Mammary epithelial cell (primary cell): ENCODE measurements at regions of chr7 and their contacts with region 1.

Region 1: DNA sequence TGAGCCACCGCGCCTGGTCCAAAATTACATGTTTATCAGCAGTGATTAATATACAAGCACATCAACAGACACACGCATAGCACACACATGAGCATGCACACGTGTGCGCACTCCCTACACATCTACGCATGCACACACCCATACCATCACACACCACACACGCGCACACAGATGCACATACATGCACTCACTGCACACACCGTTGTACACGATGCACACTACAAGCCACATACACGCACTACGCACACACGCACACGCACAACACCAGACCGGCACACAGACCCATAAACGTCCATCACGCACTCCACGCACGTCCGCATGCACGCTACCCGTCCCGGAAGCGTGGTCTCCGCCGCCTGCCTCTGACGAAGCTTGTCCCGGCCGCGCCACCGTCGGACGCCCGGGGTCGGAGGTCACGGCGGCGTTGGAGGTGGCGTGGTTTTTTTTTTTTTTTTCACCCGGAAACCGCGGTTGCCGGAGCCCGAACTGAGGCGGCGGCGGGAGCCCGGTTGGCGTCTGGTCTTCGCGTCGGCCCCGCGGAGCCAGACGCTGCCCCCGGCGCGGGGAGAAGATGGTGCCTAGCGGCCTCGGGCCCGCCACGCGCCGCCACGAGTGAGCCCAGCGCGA is at the start of gene TMEM248:
- DNase-seq: peak; percentile 81
- H3K4me3 ChIP-seq: peak within 1 kb of the TSS; percentile 82 to 94 (median 84)
- H3K27ac ChIP-seq: peak within 1 kb of the TSS; percentile 82
- H3K4me1 ChIP-seq: peaks cover 9% of the 10 kb centered on the region
- H3K27me3 ChIP-seq: no peaks in the 10 kb centered on the region
- CTCF ChIP-seq: no peak
- total RNA-seq, gene TMEM248: 76.2 to 113 TPM

Region 2: DNA sequence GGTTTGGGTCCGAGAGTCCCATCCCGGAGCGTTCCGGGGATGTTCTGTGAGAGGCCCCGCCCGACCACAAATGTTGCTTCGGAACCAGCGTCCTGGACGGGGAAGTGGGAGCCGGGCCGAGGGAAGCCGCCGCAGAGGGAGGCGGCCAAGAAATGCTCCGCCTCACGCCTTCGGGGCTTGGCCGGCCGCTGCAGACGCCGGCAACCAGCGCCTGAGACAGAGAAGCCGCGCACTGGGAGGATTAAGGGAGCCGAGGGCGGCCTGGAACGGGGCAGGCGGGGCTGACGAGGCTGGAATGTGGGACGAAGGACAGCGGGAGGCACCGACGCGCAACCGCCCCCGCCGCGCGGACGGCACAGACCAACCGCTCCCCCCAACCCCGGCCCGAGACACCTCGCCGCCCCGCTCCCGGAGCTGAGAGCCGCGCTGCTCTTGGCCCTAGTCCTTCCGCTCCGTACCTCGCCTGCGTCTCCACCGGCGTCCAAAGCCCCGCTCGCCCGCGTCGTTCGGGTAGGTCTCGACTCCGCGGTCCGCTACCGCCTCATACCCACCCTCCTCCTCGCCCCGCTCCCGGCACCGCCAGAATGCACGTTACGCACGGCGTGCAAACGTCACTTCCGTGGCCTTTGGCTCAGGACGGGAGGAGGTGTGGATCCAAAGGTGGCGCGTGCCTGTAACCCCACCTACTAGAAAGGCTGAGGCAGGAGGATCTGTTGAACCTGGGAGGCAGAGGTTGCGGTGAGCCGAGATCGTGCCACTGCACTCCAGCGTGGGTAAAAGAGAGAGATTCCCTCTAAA is 328.9 kb before region 1 on chr7:
- CTCF ChIA-PET with region 1: no interaction called
- dilution Hi-C with region 1: no loop called
- in situ Hi-C with region 1: no loop called
- intact Hi-C with region 1: loop called (anchors 5 kb)
- DNase-seq: peak; percentile 91
- H3K4me3 ChIP-seq: peak overlapping the region; percentile 71 to 96 (median 94)
- H3K27ac ChIP-seq: peak overlapping the region; percentile 92
- H3K4me1 ChIP-seq: peaks cover 16% of the 10 kb centered on the region
- H3K27me3 ChIP-seq: no peaks in the 10 kb centered on the region
- CTCF ChIP-seq: no peak

Region 3: DNA sequence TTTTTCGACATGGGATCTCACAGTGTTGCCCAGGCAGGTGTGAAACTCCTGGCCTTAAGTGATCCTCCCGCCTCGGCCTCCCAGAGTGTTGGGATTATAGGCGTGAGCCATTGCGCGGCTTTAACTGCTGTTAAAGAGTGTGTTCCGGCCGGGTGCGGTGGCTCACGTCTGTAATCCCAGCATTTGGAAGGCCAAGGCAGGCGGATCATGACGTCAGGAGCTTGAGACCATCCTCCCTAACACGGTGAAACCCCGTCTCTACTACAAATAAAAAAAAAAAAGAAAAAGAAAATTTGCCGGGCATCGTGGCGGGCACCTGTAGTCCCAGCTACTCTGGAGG is 179.2 kb before region 1 on chr7:
- CTCF ChIA-PET with region 1: no interaction called
- dilution Hi-C with region 1: no loop called
- in situ Hi-C with region 1: no loop called
- intact Hi-C with region 1: no loop called
- DNase-seq: peak; percentile 34
- H3K4me3 ChIP-seq: peak overlapping the region; percentile 89 to 98 (median 93)
- H3K27ac ChIP-seq: peak overlapping the region; percentile 92
- H3K4me1 ChIP-seq: peaks cover 9% of the 10 kb centered on the region
- H3K27me3 ChIP-seq: no peaks in the 10 kb centered on the region
- CTCF ChIP-seq: no peak

Region 4: GRCh38 chr7:66815951-66816350 is 104.9 kb before region 1 on chr7:
- CTCF ChIA-PET with region 1: no interaction called
- dilution Hi-C with region 1: no loop called
- in situ Hi-C with region 1: no loop called
- intact Hi-C with region 1: no loop called
- DNase-seq: no peak
- H3K4me3 ChIP-seq: no peak overlapping the region
- H3K27ac ChIP-seq: no peak overlapping the region
- H3K4me1 ChIP-seq: no peaks in the 10 kb centered on the region
- H3K27me3 ChIP-seq: no peaks in the 10 kb centered on the region
- CTCF ChIP-seq: no peak

Region 5: GRCh38 chr7:66883716-66884115 is 37.2 kb before region 1 on chr7:
- CTCF ChIA-PET with region 1: no interaction called
- dilution Hi-C with region 1: loop called (anchors 5 kb)
- in situ Hi-C with region 1: no loop called
- intact Hi-C with region 1: no loop called
- DNase-seq: peak; percentile 65
- H3K4me3 ChIP-seq: no peak overlapping the region
- H3K27ac ChIP-seq: no peak overlapping the region
- H3K4me1 ChIP-seq: no peaks in the 10 kb centered on the region
- H3K27me3 ChIP-seq: no peaks in the 10 kb centered on the region
- CTCF ChIP-seq: no peak

Region 6: GRCh38 chr7:66952343-66953043 is 31.6 kb after region 1 on chr7:
- CTCF ChIA-PET with region 1: no interaction called
- dilution Hi-C with region 1: no loop called
- in situ Hi-C with region 1: no loop called
- intact Hi-C with region 1: loop called (anchors 1 kb)
- DNase-seq: peak; percentile 66
- H3K4me3 ChIP-seq: no peak overlapping the region
- H3K27ac ChIP-seq: no peak overlapping the region
- H3K4me1 ChIP-seq: peaks cover 12% of the 10 kb centered on the region
- H3K27me3 ChIP-seq: no peaks in the 10 kb centered on the region
- CTCF ChIP-seq: no peak